ENCODE measurements at regions of chr15 and their contacts with region 1.

Region 1: DNA sequence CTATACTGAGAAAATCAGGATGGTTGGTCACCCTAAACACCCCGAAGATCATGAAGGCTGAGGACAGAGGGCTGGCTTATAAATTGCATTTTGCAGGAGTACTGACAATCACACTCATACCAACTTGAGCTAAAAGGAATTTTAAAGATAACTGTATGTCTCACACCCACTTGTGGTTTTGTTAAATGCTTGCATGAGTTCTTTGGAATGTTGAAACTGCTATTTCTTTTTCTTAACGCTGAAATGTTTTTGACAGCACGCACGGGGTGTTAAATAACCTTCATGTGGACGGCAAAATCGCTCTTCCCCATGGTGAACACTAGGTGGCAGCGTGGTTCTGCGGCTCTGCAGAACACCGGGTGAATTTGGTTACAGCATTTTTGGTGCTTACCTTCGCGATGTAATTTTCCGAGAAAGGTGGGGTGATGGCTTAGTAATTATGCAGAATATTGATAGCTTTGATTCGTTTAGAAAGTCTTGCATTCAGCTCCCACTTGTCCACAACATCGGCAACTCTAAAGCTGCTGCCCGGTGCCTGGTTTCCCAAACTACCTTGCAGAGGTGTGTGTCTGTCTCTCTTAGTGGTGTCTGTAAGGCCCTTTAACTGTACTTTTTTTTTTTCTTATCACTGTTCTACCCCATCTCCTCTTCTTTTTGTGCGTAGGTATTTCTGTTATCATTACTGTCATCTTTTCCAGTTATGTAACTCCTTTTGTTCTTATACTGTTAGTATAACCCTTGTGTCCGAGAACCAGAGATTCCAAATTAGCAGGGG is 51.7 kb downstream of the ARNT2 start:
- DNase-seq: peak; percentile 77
- CTCF ChIP-seq: peak; percentile 92

Region 2: DNA sequence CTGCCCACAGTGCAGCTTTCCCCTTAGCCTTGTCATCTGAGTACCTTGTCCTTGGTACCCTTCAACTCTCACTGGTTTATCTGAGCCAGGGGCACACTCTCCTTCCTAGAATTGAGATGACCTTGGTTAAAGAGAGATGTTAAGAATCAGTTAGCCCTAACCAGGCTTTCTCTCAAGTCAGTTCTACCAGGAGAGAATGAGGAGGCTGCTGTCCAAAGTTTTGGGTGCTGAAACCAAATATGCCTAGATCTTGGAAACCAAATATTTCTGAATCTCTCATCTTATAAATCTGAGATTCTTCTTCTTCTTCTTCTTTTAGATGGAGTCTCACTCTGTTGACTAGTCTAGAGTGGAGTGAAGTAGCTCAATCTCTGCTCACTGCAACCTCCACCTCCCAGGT is 191.8 kb before region 1 on chr15:
- in situ Hi-C with region 1: no loop called
- DNase-seq: no peak
- CTCF ChIP-seq: no peak

Region 3: GRCh38 chr15:80530737-80531365 is 75.0 kb after region 1 on chr15:
- in situ Hi-C with region 1: no loop called
- DNase-seq: no peak
- CTCF ChIP-seq: no peak

Region 4: DNA sequence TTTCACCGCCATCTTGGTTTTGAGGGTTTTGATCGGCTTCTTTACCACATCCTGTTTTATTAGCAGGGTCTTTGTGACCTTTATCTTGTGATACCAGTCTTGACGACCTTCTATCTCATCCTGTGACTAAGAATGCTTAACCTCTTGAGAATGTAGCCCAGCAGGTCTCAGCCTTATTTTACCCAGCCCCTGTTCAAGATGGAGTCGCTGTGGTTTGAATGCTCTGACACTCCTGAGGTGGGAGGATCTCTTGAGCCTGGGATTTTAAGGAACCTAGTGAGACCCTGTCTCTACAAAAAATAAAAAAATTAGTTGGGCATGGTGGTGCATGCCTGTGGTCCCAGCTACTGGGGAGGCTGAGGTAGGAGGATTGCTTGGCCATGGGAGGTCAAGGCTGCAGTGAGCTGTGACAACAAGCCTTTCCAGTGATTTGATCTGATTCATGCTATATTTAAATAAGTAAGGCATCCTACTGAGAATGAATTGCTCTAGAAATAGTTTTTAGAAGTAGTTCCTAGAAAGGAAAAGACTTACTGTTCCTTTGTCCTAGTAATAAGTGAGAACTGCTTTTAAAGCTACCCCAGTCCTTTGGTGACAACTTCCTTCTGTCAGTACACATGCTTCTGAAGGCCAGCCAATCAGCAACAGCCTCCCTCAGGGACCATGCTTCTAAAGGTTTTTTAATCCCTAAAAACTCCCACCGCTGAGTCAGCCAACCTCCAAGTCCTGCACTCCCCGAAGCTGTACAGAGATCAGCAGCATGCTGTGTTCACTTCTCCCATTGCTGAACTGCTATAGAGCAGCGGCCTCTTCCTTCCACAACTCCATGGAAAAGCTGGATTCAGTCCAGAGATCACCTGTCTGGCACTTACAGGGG is 314.2 kb after region 1 on chr15:
- in situ Hi-C with region 1: loop called (anchors 10 kb)
- DNase-seq: no peak
- CTCF ChIP-seq: no peak

Region 5: GRCh38 chr15:80970018-80970658 is 514.3 kb after region 1 on chr15:
- in situ Hi-C with region 1: loop called (anchors 10 kb)
- DNase-seq: peak; percentile 57
- CTCF ChIP-seq: peak; percentile 79